Mammary epithelial cell (primary cell): ENCODE measurements at regions of chr14 and their contacts with region 1.

Region 1: DNA sequence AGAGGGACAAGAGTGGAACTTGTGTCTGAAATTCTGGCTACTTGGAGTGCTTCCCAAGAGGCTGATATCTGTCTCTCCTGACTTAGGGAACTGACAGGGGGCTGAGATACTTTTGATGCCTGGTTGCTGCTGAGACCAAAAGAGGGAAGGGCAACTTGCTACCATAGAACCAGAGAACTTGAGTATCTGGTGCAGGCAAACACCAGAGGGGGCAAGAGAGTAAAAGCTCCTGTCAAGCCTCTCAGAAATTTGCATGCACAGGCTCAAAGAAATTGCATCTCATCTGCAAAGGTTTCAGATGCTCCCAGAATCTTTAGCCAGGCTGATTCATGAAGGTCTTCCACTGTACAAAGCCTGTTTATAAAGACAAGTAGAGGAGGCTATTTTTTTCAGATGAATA is 391.3 kb upstream of the FOXG1 start:
- DNase-seq: peak; percentile 30
- H3K4me3 ChIP-seq: no peak overlapping the region
- H3K27ac ChIP-seq: no peak overlapping the region
- H3K4me1 ChIP-seq: no peaks in the 10 kb centered on the region
- H3K27me3 ChIP-seq: no peaks in the 10 kb centered on the region
- CTCF ChIP-seq: peak; percentile 55 to 80

Region 2: DNA sequence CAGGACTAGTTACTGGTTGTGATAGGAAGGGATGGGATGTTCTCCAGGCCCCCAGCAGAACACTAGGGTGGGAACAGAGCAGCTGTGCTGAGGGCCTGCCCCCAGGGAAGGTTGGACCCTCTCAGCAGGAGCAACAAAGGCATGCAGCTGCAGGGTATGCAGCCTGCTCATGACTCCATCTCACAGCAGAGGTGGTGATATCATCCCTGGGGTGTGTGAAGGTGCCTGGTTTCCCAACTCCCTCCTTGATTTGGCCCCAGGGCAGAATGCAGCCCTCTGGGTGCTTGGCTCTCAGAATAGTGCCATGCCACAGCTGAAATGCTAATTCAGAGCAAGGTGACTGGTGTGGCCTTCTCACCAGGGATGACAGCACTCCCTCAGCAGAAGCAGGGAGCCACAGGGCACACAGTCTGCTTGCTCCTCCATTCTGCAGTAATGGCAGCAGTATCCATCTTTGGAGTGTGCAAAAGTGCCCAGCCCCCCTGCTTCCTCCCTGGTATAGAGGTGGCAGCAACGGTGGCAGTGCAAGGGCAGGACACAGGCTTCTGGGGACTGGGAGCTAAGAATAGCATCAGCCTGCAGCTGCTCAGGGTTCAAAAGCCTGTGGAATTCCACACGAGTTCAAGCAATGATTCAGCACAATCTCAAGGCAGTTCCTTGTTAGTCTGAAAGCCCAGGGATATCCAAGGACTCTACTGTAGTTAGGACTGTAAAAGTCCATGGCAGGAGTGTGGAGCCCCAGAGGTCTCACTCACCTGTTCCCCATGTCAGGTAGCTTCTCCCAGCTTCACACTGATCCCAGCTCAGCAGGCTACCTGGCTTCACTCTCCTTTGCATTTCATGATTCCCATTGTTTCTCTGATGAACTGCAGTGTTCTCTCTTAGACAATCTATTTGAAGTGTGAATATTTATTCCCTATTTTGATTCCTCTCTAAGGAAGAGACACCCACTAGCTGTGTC is 93.2 kb after region 1 on chr14:
- CTCF ChIA-PET with region 1: no interaction called
- dilution Hi-C with region 1: no loop called
- in situ Hi-C with region 1: no loop called
- intact Hi-C with region 1: no loop called
- DNase-seq: peak; percentile 3
- H3K4me3 ChIP-seq: no peak overlapping the region
- H3K27ac ChIP-seq: no peak overlapping the region
- H3K4me1 ChIP-seq: no peaks in the 10 kb centered on the region
- H3K27me3 ChIP-seq: no peaks in the 10 kb centered on the region
- CTCF ChIP-seq: no peak

Region 3: GRCh38 chr14:28515571-28515970 is 140.3 kb after region 1 on chr14:
- CTCF ChIA-PET with region 1: interaction called, 4 read pairs
- dilution Hi-C with region 1: no loop called
- in situ Hi-C with region 1: no loop called
- intact Hi-C with region 1: loop called (anchors 5 kb)
- DNase-seq: peak; percentile 93
- H3K4me3 ChIP-seq: no peak overlapping the region
- H3K27ac ChIP-seq: no peak overlapping the region
- H3K4me1 ChIP-seq: no peaks in the 10 kb centered on the region
- H3K27me3 ChIP-seq: no peaks in the 10 kb centered on the region
- CTCF ChIP-seq: no peak

Region 4: DNA sequence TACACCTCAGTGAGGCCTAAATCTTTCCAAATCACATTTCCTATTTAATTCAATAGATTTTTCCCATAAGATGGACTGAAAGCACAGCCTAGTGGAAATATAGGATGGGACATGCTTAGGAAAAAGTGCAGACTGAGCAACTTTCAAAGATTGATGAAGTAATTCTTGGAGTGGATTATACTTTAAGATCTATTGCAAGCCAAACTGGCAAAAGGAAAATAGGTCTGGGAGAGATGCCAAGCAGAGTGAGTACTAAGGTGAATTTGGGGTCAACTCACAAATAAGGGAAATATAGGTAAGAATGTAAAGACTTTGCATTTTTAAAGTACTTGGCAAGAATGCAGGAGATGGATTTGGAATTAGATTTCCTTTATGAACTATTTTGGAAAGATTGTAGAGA is 221.1 kb after region 1 on chr14:
- CTCF ChIA-PET with region 1: no interaction called
- dilution Hi-C with region 1: no loop called
- in situ Hi-C with region 1: no loop called
- intact Hi-C with region 1: loop called (anchors 5 kb)
- DNase-seq: peak; percentile 17
- H3K4me3 ChIP-seq: no peak overlapping the region
- H3K27ac ChIP-seq: no peak overlapping the region
- H3K4me1 ChIP-seq: no peaks in the 10 kb centered on the region
- H3K27me3 ChIP-seq: no peaks in the 10 kb centered on the region
- CTCF ChIP-seq: peak; percentile 40 to 66

Region 5: DNA sequence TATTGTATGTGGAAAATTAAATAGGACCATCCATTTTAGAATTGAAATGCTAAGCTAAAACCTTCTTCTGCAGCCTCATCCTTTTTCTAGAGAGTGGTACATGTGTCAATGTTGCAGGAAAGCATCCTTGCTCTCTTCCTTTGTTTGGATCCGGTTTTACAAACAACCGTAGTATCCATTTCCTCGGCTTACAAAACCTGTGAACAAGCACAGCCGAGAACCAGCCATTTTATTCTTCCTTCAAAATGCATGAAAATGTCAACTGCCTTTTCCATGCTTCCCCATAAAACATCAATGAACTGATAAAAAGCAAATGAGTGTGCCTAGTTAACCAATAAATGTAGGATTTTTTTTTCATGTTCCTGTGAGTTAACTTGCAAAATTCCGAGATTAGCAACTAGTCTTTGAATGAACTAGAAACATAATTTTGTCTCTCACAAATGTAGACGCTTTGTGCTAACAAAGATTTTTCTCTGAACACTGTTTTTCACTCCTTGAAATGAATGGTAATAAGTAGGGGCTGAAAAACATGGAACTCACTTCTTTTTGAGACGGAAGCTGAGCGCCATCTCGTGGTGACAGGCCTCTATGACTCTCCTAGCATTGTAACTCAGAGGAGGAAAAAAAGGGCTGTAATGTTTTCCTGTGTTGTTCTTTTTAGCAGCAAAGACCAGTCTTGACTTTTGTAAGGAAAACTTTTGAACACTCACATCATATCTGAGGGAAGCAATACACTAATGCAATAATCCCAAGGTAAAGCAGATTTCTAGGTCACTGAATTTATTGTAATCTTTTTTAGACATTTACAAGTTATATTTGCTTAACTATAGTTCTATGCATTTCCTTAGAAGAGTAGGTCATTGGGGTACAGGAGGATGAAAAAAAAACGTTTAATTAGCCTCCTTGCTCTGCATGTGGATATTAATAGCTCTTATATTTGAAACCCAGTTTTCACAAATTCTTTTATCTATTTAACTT is 233.8 kb after region 1 on chr14:
- CTCF ChIA-PET with region 1: no interaction called
- dilution Hi-C with region 1: no loop called
- in situ Hi-C with region 1: no loop called
- intact Hi-C with region 1: loop called (anchors 1 kb)
- DNase-seq: peak; percentile 37
- H3K4me3 ChIP-seq: no peak overlapping the region
- H3K27ac ChIP-seq: no peak overlapping the region
- H3K4me1 ChIP-seq: no peaks in the 10 kb centered on the region
- H3K27me3 ChIP-seq: no peaks in the 10 kb centered on the region
- CTCF ChIP-seq: peak; percentile 91